ENCODE measurements at regions of chr1 and their contacts with region 1.

Region 1: DNA sequence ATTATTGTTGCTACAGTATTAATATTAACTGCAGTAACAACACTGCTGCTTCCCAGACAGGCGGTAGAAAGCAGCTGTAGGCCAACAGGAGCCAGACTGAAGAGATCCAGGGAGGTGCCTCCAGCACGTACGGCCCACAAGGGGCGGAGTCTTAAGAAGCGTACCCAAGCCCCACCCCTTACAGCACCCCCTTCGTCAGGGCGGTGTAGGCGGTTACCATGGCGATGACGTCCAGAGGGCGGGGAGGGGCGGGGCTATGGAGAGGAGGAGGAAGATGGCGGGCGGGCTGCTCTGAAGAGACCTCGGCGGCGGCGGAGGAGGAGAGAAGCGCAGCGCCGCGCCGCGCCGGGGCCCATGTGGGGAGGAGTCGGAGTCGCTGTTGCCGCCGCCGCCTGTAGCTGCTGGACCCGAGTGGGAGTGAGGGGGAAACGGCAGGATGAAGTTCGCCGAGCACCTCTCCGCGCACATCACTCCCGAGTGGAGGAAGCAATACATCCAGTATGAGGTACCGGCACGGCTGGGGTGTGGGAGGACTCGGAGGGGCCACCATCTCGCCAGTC is at the start of gene XPR1:
- DNase-seq: peak; percentile 98
- H3K4me3 Mint-ChIP-seq: no peak within 1 kb of the TSS
- H3K27ac Mint-ChIP-seq: peak within 1 kb of the TSS; percentile 93
- H3K4me1 Mint-ChIP-seq: peaks cover 6% of the 10 kb centered on the region
- H3K27me3 Mint-ChIP-seq: peaks cover 8% of the 10 kb centered on the region
- total RNA-seq, gene XPR1: 24.2 and 24.7 TPM in 2 replicates

Region 2: GRCh38 chr1:180502360-180503273 is 129.2 kb before region 1 on chr1 and contains the start of gene ACBD6:
- intact Hi-C with region 1: loop called (anchors 1 kb)
- DNase-seq: peak; percentile 96
- H3K4me3 Mint-ChIP-seq: peak within 1 kb of the TSS; percentile 97
- H3K27ac Mint-ChIP-seq: peak within 1 kb of the TSS; percentile 97
- H3K4me1 Mint-ChIP-seq: peaks cover 20% of the 10 kb centered on the region
- H3K27me3 Mint-ChIP-seq: peaks cover 5% of the 10 kb centered on the region
- total RNA-seq, gene ACBD6: 49.8 and 54.7 TPM in 2 replicates

Region 3: GRCh38 chr1:180571832-180572636 is 59.8 kb before region 1 on chr1:
- intact Hi-C with region 1: loop called (anchors 1 kb)
- DNase-seq: peak; percentile 65
- H3K4me3 Mint-ChIP-seq: peak overlapping the region; percentile 38
- H3K27ac Mint-ChIP-seq: peak overlapping the region; percentile 73
- H3K4me1 Mint-ChIP-seq: peaks cover 22% of the 10 kb centered on the region
- H3K27me3 Mint-ChIP-seq: peaks cover 11% of the 10 kb centered on the region

Region 4: GRCh38 chr1:180609643-180610555 is 21.9 kb before region 1 on chr1:
- intact Hi-C with region 1: no loop called
- DNase-seq: no peak
- H3K4me3 Mint-ChIP-seq: no peak overlapping the region
- H3K27ac Mint-ChIP-seq: no peak overlapping the region
- H3K4me1 Mint-ChIP-seq: peaks cover 6% of the 10 kb centered on the region
- H3K27me3 Mint-ChIP-seq: no peaks in the 10 kb centered on the region

Region 5: DNA sequence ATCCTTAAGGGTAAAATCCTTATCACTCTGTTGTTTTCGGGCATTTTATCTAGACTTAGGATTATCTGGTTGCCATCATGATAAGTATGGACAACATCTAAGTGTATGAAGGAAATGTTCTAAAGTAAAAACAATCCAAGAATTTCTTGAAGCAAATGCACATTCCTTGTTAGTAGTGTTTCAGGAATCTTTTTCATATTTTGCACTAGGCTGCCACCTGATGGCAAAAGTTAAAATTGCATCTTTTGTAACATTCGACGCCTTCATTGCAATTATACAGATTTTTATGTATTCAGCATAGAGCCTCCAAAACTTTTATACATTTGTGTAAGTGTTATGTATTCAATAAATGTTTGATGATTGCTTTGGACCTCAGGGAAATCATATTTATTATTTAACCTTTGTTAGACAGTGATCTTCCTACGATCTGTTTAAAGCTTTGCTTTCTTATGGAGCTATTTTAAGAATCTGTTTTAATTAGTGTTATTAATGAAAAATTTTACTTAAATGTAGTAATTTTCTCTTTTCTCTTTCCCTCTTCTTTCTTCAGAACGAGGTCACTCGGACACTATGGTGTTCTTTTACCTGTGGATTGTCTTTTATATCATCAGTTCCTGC is 231.4 kb after region 1 on chr1:
- intact Hi-C with region 1: loop called (anchors 5 kb)
- DNase-seq: peak; percentile 80
- H3K4me3 Mint-ChIP-seq: no peak overlapping the region
- H3K27ac Mint-ChIP-seq: no peak overlapping the region
- H3K4me1 Mint-ChIP-seq: no peaks in the 10 kb centered on the region
- H3K27me3 Mint-ChIP-seq: no peaks in the 10 kb centered on the region

Region 6: DNA sequence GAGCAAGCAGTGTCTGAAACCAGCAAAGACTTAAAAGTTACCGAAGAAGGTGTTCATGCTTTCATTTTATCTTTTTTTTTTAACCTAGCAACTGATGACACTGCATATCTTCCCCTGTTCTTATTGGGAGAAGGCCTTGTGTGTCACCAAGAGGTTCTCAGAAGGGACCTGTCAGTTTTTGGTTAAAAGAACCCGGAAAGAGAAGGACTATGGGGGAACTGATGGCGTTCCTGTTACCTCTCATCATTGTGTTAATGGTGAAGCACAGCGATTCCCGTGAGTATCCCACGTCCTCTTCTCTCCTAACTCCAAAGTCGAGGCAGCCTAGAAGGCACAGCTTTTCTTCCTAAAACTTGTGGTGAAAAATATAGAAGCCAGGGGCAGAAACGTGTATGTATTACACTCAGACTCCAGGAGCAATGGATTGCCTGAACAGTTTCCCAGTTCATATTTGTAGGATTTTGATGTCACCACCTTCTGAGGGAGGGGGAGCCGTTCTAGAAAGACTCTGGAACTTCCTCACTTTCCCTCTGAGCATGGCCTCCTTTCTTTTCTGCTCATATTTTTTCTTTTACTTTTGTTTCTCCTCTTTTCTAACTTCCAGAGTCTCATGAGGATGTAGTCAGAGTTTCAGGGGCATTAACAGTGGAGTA is 402.1 kb after region 1 on chr1 and contains the start of gene MR1:
- intact Hi-C with region 1: loop called (anchors 1 kb)
- DNase-seq: peak; percentile 88
- H3K4me3 Mint-ChIP-seq: peak within 1 kb of the TSS; percentile 96
- H3K27ac Mint-ChIP-seq: peak within 1 kb of the TSS; percentile 97
- H3K4me1 Mint-ChIP-seq: peaks cover 51% of the 10 kb centered on the region
- H3K27me3 Mint-ChIP-seq: peaks cover 5% of the 10 kb centered on the region
- total RNA-seq, gene MR1: 14.6 and 16.2 TPM in 2 replicates

Region 7: DNA sequence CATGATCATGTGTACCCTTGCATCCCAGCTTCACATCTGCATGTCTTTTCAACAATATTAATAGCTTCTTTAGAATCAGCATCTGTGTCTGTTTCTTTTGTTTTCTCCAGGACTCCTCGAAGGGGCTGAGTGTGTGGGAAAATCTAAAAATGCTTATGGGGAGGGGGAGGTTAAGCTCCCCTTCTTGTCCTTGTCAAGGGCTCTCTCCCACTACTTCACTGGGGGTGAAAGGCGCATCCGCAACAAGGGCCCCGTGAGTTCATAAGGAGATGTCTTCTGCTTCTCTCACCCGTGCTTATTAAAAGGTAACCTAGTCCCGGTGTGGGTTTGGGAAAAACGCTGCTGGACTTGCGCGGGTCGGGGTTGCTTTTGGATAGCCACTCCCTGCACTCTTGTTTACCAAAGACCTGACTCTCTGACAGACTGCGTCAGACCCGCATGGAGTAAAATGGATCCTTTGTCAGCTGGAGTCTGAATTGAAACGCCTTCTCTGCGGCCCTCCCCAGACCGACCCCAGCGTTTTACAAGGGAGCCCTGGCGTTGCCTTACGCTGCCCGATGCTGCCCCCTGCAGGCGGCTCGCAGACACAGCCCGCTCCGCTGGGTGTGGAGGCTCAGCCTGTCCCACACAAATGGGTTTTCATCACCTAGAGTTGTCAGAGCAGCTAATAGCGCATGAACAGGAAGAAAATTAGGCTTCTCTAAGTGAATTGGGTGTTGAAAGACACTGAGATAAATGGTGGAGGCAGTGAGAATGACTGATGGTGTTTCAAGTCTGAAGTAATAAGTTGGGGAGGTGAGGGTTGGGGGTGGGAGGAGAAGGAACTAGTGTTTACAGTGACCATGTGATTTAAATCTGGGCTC is 510.5 kb after region 1 on chr1:
- intact Hi-C with region 1: loop called (anchors 1 kb)
- DNase-seq: peak; percentile 97
- H3K4me3 Mint-ChIP-seq: peak overlapping the region; percentile 70
- H3K27ac Mint-ChIP-seq: peak overlapping the region; percentile 90
- H3K4me1 Mint-ChIP-seq: peaks cover 63% of the 10 kb centered on the region
- H3K27me3 Mint-ChIP-seq: peaks cover 16% of the 10 kb centered on the region

Measured in activated CD4-positive, alpha-beta T cell treated with anti-CD3 and anti-CD28 coated beads, Interleukin-2, amount 10 ng/mL, durations not matched to agents 24 days and 14 days (primary cell).